OCI-LY7 (cell line): ENCODE measurements at regions of chr19 and their contacts with region 1.

Region 1: GRCh38 chr19:38929929-38930775 is at the start of gene SARS2:
- DNase-seq: peak; percentile 95
- H3K4me3 ChIP-seq: peak within 1 kb of the TSS; percentile 96
- H3K27ac ChIP-seq: peak within 1 kb of the TSS; percentile 71
- H3K4me1 ChIP-seq: peaks cover 31% of the 10 kb centered on the region
- CTCF ChIP-seq: peak; percentile 99
- total RNA-seq, gene SARS2: 29.5 and 37.7 TPM in 2 replicates

Region 2: DNA sequence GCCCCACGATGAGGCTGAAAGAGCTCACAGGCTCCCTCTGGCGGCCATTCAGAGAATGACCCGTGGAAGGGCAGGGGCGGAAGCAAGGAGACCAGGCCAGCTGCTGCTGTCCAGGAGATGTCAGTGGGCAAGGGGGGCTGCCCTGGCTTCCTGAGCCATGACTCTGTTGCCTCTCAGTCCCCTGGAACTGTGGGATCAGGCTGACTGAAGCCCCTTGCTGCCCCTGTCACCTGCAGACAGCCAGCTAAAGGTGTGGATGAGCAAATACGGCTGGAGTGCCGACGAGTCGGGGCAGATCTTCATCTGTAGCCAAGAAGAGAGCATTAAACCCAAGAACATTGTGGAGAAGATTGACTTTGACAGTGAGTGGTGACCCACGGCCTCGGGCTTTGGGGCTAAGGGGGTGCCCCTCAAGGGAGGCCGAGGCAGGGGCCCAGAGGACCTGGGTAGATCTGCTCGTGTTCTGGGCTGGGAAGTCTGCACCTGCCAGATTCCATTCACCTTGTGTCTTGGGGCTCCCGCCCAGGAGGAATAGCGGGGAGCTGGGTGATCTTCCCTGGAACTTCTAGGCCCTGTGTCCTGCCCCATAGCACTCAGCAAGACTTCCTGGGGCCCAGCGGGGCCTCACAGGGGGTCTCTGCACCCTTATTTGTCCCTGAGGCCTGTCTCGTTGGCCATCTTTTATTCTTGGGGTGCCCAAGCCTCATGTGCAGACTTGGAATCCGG is 295.2 kb before region 1 on chr19:
- CTCF ChIA-PET with region 1: no interaction called
- POLR2A ChIA-PET with region 1: no interaction called
- intact Hi-C with region 1: loop called (anchors 5 kb)
- DNase-seq: peak; percentile 70
- H3K4me3 ChIP-seq: no peak overlapping the region
- H3K27ac ChIP-seq: no peak overlapping the region
- H3K4me1 ChIP-seq: peaks cover 12% of the 10 kb centered on the region
- CTCF ChIP-seq: peak; percentile 91

Region 3: GRCh38 chr19:38729653-38730469 is 200.3 kb before region 1 on chr19:
- CTCF ChIA-PET with region 1: interaction called, 3 read pairs
- POLR2A ChIA-PET with region 1: no interaction called
- intact Hi-C with region 1: loop called (anchors 1 kb)
- DNase-seq: peak; percentile 73
- H3K4me3 ChIP-seq: no peak overlapping the region
- H3K27ac ChIP-seq: no peak overlapping the region
- H3K4me1 ChIP-seq: peaks cover 14% of the 10 kb centered on the region
- CTCF ChIP-seq: peak; percentile 91